ENCODE measurements at regions of chr7 and their contacts with region 1.

Region 1: GRCh38 chr7:154517768-154518167 is 465.6 kb downstream of the DPP6 start:
- DNase-seq: no peak
- ATAC-seq: no peak
- H3K4me3 ChIP-seq: no peak overlapping the region
- H3K27ac ChIP-seq: no peak overlapping the region
- H3K4me1 ChIP-seq: no peaks in the 10 kb centered on the region
- H3K27me3 ChIP-seq: peaks cover 16 to 18% of the 10 kb centered on the region in 2 experiments
- CTCF ChIP-seq: no peak
- EP300 ChIP-seq: no peak
- POLR2A ChIP-seq: no peak
- RAD21 ChIP-seq: no peak

Region 2: DNA sequence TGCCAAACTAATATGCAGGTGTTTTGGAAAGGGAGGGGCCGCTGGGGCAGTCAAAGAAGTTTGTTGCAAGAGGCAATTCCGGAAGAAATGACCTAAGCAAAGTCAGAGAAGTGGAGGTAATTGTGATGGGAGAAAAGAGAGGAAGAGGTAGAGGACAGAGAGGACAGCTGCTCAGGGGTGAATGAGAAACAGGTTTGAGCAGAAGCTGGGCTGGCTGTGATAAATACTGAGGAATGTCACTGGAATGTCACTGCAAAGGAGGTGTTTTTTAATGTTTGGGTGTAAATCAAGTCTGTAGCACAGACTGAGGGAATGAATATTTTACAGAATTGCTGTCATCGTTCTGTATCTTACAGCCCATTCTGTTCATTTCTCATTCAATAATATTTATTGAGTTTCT is 258.4 kb before region 1 on chr7:
- CTCF ChIA-PET with region 1: no interaction called
- POLR2A ChIA-PET with region 1: no interaction called
- in situ Hi-C with region 1: no loop called
- intact Hi-C with region 1: no loop called
- DNase-seq: no peak
- ATAC-seq: no peak
- H3K4me3 ChIP-seq: no peak overlapping the region
- H3K27ac ChIP-seq: no peak overlapping the region
- H3K4me1 ChIP-seq: no peaks in the 10 kb centered on the region
- H3K27me3 ChIP-seq: peaks cover 0 to 11% of the 10 kb centered on the region in 2 experiments; a peak in 3 of 5 replicates
- CTCF ChIP-seq: no peak
- EP300 ChIP-seq: no peak
- POLR2A ChIP-seq: no peak
- RAD21 ChIP-seq: no peak

Region 3: DNA sequence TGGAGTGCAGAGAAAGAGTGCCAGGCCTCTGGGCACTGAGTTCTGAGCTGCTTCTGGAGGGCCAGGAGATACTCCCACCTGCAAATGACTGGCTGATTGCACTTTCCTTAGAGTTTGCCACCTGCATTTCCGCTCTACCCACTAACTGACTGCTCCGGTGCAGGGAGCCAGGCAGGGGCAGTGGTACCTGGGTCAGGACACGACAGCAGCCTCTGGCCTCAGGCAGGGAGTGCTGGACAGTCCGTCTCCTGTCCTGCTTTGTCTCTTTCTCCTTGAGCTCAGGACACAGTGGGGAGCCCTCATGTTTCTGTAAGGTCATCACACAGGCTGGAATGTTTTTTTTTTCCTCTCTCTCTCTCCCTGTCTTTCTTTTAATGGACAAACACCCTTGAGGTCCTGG is 213.5 kb before region 1 on chr7:
- CTCF ChIA-PET with region 1: no interaction called
- POLR2A ChIA-PET with region 1: no interaction called
- in situ Hi-C with region 1: no loop called
- intact Hi-C with region 1: no loop called
- DNase-seq: no peak
- ATAC-seq: no peak
- H3K4me3 ChIP-seq: no peak overlapping the region
- H3K27ac ChIP-seq: no peak overlapping the region
- H3K4me1 ChIP-seq: no peaks in the 10 kb centered on the region
- H3K27me3 ChIP-seq: peaks cover 29 to 45% of the 10 kb centered on the region in 2 experiments
- CTCF ChIP-seq: no peak
- EP300 ChIP-seq: no peak
- POLR2A ChIP-seq: no peak
- RAD21 ChIP-seq: no peak

Region 4: DNA sequence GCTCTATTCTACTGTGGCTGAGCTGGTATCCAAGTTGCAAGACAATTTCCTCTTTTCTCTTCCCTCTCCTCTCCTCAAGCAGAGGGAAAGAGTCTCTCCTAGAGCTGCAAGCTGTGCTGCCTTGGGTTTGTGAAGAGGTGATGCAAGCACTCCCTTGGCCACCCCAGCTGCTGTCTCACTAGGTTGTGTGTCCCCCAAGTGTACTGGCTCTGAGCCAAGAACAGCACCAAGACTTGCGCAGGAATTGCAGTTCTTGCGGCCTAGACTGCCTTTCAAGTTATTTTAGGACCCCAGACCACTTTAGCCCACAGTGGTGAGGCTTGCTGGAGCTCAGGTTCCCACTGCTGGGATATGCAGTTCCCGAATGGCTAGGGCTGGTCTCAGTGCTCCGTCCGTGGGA is 54.0 kb before region 1 on chr7:
- CTCF ChIA-PET with region 1: no interaction called
- POLR2A ChIA-PET with region 1: no interaction called
- in situ Hi-C with region 1: no loop called
- intact Hi-C with region 1: no loop called
- DNase-seq: no peak
- ATAC-seq: no peak
- H3K4me3 ChIP-seq: no peak overlapping the region
- H3K27ac ChIP-seq: no peak overlapping the region
- H3K4me1 ChIP-seq: no peaks in the 10 kb centered on the region
- H3K27me3 ChIP-seq: no peaks in the 10 kb centered on the region
- CTCF ChIP-seq: no peak
- EP300 ChIP-seq: no peak
- POLR2A ChIP-seq: no peak
- RAD21 ChIP-seq: no peak

Region 5: DNA sequence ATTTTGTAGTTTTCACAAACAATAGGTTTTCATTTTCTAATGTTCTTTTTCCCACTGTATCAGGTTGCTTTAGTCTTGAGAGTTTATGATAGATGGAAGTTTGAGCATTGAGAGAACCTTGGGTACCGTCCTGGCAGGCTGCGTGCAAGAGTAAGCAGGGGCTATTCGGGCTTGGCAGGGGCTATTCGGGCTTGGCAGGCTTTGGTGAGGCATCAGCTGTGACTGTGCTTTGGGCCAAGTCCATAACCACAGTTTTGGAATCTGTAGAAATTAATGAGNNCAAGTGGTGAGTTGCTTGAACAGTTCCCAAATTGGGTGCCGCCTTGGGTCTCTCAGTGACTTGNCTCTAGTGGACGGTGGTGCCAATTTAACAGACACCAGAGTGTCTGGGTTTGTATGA is 60.6 kb after region 1 on chr7:
- CTCF ChIA-PET with region 1: no interaction called
- POLR2A ChIA-PET with region 1: no interaction called
- in situ Hi-C with region 1: no loop called
- intact Hi-C with region 1: loop called (anchors 10 kb)
- DNase-seq: no peak
- ATAC-seq: no peak
- H3K4me3 ChIP-seq: no peak overlapping the region
- H3K27ac ChIP-seq: no peak overlapping the region
- H3K4me1 ChIP-seq: no peaks in the 10 kb centered on the region
- H3K27me3 ChIP-seq: peaks cover 41 to 56% of the 10 kb centered on the region in 2 experiments
- CTCF ChIP-seq: no peak
- EP300 ChIP-seq: no peak
- POLR2A ChIP-seq: no peak
- RAD21 ChIP-seq: no peak

Region 6: GRCh38 chr7:154620141-154620755 is 102.5 kb after region 1 on chr7:
- CTCF ChIA-PET with region 1: no interaction called
- POLR2A ChIA-PET with region 1: no interaction called
- in situ Hi-C with region 1: loop called (anchors 5 kb)
- intact Hi-C with region 1: no loop called
- DNase-seq: no peak
- ATAC-seq: no peak
- H3K4me3 ChIP-seq: no peak overlapping the region
- H3K27ac ChIP-seq: no peak overlapping the region
- H3K4me1 ChIP-seq: peaks cover 0 to 3% of the 10 kb centered on the region in 2 experiments; a peak in 1 of 5 replicates
- H3K27me3 ChIP-seq: peaks cover 32 to 51% of the 10 kb centered on the region in 2 experiments
- CTCF ChIP-seq: no peak
- EP300 ChIP-seq: no peak
- POLR2A ChIP-seq: no peak
- RAD21 ChIP-seq: no peak

Region 7: GRCh38 chr7:154729056-154729455 is 211.3 kb after region 1 on chr7:
- CTCF ChIA-PET with region 1: no interaction called
- POLR2A ChIA-PET with region 1: no interaction called
- in situ Hi-C with region 1: no loop called
- intact Hi-C with region 1: no loop called
- DNase-seq: no peak
- ATAC-seq: no peak
- H3K4me3 ChIP-seq: no peak overlapping the region
- H3K27ac ChIP-seq: no peak overlapping the region
- H3K4me1 ChIP-seq: no peaks in the 10 kb centered on the region
- H3K27me3 ChIP-seq: peaks cover 0 to 7% of the 10 kb centered on the region in 2 experiments; a peak in 1 of 5 replicates
- CTCF ChIP-seq: no peak
- EP300 ChIP-seq: no peak
- POLR2A ChIP-seq: no peak
- RAD21 ChIP-seq: no peak